AG04450 (cell line): ENCODE measurements at regions of chr7 and their contacts with region 1.

Region 1: DNA sequence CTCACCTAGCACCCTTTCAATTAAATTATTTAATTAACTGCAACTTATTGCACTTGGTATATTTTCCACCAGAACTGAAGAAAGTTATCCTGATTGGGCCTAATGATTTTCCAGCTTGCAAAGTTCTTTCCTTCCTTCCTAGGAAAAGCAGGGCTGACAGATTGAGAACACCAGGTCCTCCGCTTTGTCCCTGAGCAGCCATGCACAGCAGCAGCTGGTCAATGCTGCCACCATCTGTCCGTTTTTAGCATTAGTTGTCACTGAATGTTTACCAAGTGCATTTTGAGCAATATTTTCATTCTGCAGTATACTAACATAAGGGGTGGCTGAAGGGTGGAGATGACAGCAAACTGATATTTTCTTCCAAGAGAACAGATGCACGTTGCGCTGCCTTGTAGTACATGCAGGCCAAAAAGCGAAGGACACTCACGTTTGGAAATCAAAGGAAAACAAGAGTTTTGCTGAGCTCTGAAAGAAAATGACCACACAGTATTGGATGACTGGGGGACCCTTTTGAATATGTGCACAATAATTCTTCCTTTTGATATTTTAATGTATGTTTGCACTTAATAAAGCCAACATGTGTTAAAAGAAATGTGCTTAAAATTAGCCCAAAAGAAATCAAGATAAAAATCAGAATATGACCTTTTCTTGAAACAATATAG is 248.8 kb upstream of the PTN start:
- DNase-seq: peak; percentile 59
- H3K4me3 ChIP-seq: no peak overlapping the region
- H3K27ac ChIP-seq: peak overlapping the region; percentile 88
- H3K27me3 ChIP-seq: no peaks in the 10 kb centered on the region
- CTCF ChIP-seq: peak; percentile 92

Region 2: GRCh38 chr7:136405931-136406777 is 1186.2 kb before region 1 on chr7:
- CTCF ChIA-PET with region 1: interaction called, 25 read pairs
- POLR2A ChIA-PET with region 1: no interaction called
- DNase-seq: peak; percentile 36
- H3K4me3 ChIP-seq: no peak overlapping the region
- H3K27ac ChIP-seq: no peak overlapping the region
- H3K27me3 ChIP-seq: no peaks in the 10 kb centered on the region
- CTCF ChIP-seq: peak; percentile 81

Region 3: DNA sequence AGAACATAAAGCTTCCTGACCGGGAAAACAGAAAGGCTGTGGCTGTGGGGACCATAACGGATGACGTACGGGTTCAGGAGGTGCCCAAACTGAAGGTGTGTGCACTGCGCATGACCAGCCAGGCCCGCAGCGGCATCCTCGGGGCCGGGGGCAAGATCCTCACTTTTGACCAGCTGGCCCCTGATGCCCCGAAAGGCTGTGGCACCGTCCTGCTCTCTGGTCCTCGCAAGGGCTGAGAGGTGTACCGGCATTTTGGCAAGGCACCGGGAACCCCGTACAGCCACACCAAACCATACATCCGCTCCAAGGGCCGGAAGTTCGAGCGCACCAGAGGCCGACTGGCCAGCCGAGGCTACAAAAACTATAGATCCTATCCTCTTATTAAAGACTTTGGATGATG is 428.1 kb before region 1 on chr7:
- CTCF ChIA-PET with region 1: interaction called, 74 read pairs
- POLR2A ChIA-PET with region 1: no interaction called
- DNase-seq: no peak
- H3K4me3 ChIP-seq: no peak overlapping the region
- H3K27ac ChIP-seq: no peak overlapping the region
- H3K27me3 ChIP-seq: no peaks in the 10 kb centered on the region
- CTCF ChIP-seq: no peak

Region 4: GRCh38 chr7:137454246-137454724 is 138.1 kb before region 1 on chr7:
- CTCF ChIA-PET with region 1: interaction called, 52 read pairs
- POLR2A ChIA-PET with region 1: interaction called, 24 read pairs
- DNase-seq: peak; percentile 29
- H3K4me3 ChIP-seq: peak overlapping the region; percentile 22
- H3K27ac ChIP-seq: peak overlapping the region; percentile 88
- H3K27me3 ChIP-seq: no peaks in the 10 kb centered on the region
- CTCF ChIP-seq: peak; percentile 67

Region 5: DNA sequence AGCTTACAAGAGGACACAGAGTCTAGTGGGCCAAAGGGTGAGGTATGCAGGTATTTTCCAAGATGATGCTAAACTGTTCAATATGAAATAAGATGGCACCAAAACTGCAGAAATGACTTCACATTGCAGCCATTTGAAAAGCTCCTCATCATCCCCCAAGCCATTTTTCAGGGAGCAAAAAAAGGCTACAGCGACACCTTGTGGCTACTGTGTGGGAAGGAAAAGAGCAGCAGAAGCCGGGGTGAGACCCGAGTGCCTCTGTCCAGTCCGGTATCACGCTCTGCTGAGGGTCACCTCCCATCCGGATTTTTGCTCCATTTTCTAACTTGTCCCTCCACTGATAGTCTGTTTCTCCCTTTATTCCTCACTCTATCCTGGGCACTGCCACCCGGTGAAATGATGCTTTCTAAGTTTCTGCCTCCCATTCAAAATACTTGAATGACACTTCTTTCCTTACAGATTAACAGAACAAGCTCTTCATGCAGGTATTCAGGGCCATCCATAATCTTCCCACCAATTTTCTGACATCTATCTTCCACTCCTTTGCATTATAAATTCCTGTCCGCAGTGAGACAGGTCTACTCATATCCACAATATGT is 34.2 kb after region 1 on chr7:
- CTCF ChIA-PET with region 1: interaction called, 11 read pairs
- POLR2A ChIA-PET with region 1: no interaction called
- DNase-seq: peak; percentile 6
- H3K4me3 ChIP-seq: no peak overlapping the region
- H3K27ac ChIP-seq: no peak overlapping the region
- H3K27me3 ChIP-seq: no peaks in the 10 kb centered on the region
- CTCF ChIP-seq: peak; percentile 81